WTC11 (cell line): ENCODE measurements at regions of chr6 and their contacts with region 1.

Region 1: GRCh38 chr6:13194852-13195251 is 133.5 kb downstream of the TBC1D7 start:
- DNase-seq: peak; percentile 61
- ATAC-seq: peak; percentile 73
- H3K4me3 Mint-ChIP-seq: no peak overlapping the region
- H3K27ac Mint-ChIP-seq: no peak overlapping the region
- H3K4me1 Mint-ChIP-seq: peaks cover 26% of the 10 kb centered on the region
- H3K27me3 Mint-ChIP-seq: no peaks in the 10 kb centered on the region; the same call in 1 of the 2 replicates
- CTCF ChIP-seq: no peak

Region 2: DNA sequence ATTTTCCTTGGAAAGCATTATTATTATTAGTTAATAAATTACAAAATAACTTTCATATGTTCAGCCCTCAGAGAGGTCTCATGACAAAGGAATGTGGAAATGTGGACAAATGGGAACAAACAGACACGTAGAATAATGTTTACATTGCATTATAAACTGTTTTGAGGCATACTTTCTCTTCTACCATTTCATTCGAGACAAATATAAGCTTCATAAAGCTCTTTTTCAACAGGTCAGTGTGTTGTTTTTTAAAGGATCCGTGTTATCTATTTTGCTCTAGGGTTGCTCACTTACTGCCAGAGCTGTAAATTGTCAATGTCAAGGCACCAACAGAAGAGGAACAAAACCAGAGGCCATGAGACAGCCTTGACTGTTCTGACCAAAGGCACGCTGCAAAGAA is 221.5 kb before region 1 on chr6:
- CTCF ChIA-PET with region 1: no interaction called
- POLR2A ChIA-PET with region 1: no interaction called
- DNase-seq: no peak
- ATAC-seq: no peak
- H3K4me3 Mint-ChIP-seq: no peak overlapping the region
- H3K27ac Mint-ChIP-seq: no peak overlapping the region
- H3K4me1 Mint-ChIP-seq: peaks cover 5% of the 10 kb centered on the region
- H3K27me3 Mint-ChIP-seq: no peaks in the 10 kb centered on the region; the same call in 1 of the 2 replicates
- CTCF ChIP-seq: no peak

Region 3: GRCh38 chr6:13205106-13205505 is 10.3 kb after region 1 on chr6:
- CTCF ChIA-PET with region 1: interaction called, 11 read pairs
- POLR2A ChIA-PET with region 1: no interaction called
- DNase-seq: no peak
- ATAC-seq: no peak
- H3K4me3 Mint-ChIP-seq: no peak overlapping the region
- H3K27ac Mint-ChIP-seq: no peak overlapping the region
- H3K4me1 Mint-ChIP-seq: peaks cover 8% of the 10 kb centered on the region
- H3K27me3 Mint-ChIP-seq: no peaks in the 10 kb centered on the region
- CTCF ChIP-seq: no peak

Region 4: DNA sequence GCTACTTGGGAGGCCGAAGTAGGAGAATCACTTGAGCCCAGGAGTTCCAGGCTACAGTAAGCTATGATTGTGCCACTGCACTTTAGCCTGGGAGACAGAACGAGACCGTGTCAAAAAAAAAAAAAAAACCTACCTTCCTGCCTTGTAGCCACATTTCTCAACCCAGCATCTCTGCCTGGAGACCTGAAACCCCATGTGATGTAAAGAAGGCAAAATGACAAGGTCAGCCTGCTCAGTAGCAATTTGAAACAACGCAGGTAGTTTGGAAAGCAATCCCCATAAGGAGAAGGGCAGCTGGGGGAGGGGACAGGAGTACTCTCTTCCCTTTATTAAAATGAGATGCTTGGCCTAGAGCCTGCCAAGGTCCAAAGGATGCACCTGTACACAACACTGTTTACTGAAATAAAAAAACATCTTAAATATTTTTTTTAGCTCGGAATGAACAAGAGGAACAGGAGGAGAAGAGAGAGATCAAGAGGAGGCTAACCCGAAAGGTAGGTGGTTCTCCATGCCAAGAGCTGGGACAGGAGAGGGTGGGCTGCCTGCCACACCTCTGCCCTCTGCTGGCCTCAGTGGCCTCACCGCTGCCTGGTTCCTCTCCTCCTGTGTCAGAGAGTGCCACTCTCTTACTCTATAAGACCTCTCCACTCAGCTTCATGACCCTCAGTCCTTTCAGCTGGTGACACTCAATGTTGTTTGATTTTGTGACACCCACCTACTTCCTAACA is 83.1 kb after region 1 on chr6:
- CTCF ChIA-PET with region 1: interaction called, 22 read pairs
- POLR2A ChIA-PET with region 1: no interaction called
- DNase-seq: peak; percentile 62
- ATAC-seq: peak; percentile 92
- H3K4me3 Mint-ChIP-seq: no peak overlapping the region
- H3K27ac Mint-ChIP-seq: no peak overlapping the region
- H3K4me1 Mint-ChIP-seq: peaks cover 17% of the 10 kb centered on the region
- H3K27me3 Mint-ChIP-seq: no peaks in the 10 kb centered on the region
- CTCF ChIP-seq: peak; percentile 20; the same call in 1 of the 2 replicates